Right cardiac atrium (tissue), 5 donors: ENCODE measurements at regions of chr22 and their contacts with region 1.

Region 1: DNA sequence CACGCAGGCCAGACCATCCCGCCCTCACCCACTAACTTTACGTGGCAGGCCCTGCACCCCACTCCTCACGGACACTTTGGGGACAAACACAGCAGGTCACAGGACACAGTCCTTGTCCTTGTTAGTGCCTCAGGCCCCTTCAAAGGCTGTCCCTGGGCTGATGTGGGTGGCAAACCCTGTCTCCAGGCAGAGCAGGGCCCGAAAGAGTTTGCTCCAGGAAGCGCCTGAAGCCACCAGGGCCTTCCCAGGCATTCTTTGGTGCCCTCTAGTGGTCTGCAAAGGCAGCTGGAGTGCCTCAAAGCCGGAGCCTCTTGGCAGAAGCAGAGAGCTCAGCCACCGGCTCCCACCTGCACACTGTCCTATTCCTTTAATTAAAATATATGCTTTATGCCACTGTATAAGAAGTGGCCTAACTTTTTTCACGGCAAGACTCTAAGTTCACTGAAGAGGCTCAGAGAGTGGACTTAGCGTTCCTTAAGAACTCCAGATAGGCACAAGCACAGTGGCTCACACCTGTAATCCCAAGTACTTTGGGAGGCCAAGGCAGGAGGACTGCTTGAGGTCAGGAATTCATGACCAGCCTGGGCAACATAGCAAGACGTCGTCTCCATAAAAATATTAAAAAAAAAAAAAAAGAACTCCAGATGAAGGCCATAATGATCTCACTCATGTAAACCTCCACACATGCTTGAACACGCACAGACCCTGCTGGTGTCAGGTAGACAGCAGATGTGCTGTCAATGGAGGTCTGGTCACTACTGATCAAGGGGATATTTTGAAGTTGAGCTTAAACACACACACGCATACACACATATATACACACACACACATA is 11.1 kb downstream of the TXN2 start:
- DNase-seq: peak; percentile 79 to 89 (median 88)
- ATAC-seq: peak; percentile 70 to 76
- H3K4me3 ChIP-seq: no peak overlapping the region
- H3K27ac ChIP-seq: peak overlapping the region; percentile 4
- H3K4me1 ChIP-seq: peaks cover 2% of the 10 kb centered on the region
- H3K27me3 ChIP-seq: no peaks in the 10 kb centered on the region

Region 2: GRCh38 chr22:36294801-36295200 is 175.6 kb before region 1 on chr22:
- intact Hi-C with region 1: loop called in 1 of 4 experiments (anchors 5 kb)
- DNase-seq: peak in 1 of 3 donors; percentile 49
- ATAC-seq: no peak
- H3K4me3 ChIP-seq: no peak overlapping the region
- H3K27ac ChIP-seq: no peak overlapping the region
- H3K4me1 ChIP-seq: no peaks in the 10 kb centered on the region
- H3K27me3 ChIP-seq: no peaks in the 10 kb centered on the region

Region 3: GRCh38 chr22:36301384-36301828 is 169.0 kb before region 1 on chr22:
- intact Hi-C with region 1: loop called (anchors 2 to 5 kb)
- DNase-seq: peak; percentile 68 to 90 (median 87)
- ATAC-seq: peak; percentile 47 to 59
- H3K4me3 ChIP-seq: no peak overlapping the region
- H3K27ac ChIP-seq: peak overlapping the region; percentile 17
- H3K4me1 ChIP-seq: no peaks in the 10 kb centered on the region
- H3K27me3 ChIP-seq: no peaks in the 10 kb centered on the region